ENCODE measurements at regions of chr7 and their contacts with region 1.

Region 1: DNA sequence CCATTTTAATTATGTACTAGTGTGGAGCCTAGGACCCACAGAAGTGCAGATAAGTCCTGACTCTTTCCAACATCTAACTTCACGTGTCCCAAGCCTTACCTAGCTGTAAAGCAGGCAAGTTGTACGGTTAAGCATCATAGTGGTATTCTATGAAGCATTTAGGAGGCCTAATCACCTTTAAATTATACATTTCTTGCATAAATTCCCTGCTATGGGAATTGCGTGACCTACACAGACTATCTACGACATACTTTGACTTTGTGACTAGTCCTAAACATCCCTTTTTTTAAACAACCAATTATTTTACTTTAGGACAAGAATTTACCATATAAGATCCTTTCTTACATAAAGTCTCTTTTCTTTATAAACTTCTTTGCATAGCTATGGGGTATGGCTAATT is 37.7 kb upstream of the LRGUK start:
- DNase-seq: peak in 1 of 2 experiments; percentile 33
- ATAC-seq: no peak
- H3K4me3 ChIP-seq: no peak overlapping the region
- H3K27ac ChIP-seq: no peak overlapping the region
- H3K4me1 ChIP-seq: no peaks in the 10 kb centered on the region
- CTCF ChIP-seq: no peak
- EP300 ChIP-seq: no peak
- POLR2A ChIP-seq: no peak
- RAD21 ChIP-seq: no peak

Region 2: DNA sequence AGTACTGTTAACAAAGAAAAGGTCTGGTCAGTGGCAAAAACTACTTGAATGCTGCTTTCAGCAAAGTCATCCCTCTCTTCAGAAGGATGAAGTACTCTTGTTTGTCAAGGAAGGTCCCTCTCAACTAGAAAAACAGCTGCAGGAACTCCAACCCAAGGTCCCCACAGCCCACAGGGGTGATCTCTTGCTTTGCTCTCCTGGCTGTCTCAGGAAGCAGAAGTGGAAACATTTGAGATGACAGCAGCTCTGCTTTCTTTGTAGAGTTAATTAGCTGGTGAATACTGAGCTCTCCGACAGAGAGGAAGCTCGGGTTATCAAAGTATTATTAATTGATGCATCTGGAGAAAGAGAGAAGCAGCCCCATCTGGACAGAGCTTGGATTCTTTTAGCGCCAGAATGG is 12.3 kb after region 1 on chr7:
- CTCF ChIA-PET with region 1: interaction called, 11 read pairs
- POLR2A ChIA-PET with region 1: no interaction called
- DNase-seq: no peak
- ATAC-seq: no peak
- H3K4me3 ChIP-seq: no peak overlapping the region
- H3K27ac ChIP-seq: no peak overlapping the region
- H3K4me1 ChIP-seq: no peaks in the 10 kb centered on the region
- CTCF ChIP-seq: no peak
- EP300 ChIP-seq: no peak
- POLR2A ChIP-seq: no peak
- RAD21 ChIP-seq: no peak